T-cell (primary cell): ENCODE measurements at regions of chr12 and their contacts with region 1.

Region 1: DNA sequence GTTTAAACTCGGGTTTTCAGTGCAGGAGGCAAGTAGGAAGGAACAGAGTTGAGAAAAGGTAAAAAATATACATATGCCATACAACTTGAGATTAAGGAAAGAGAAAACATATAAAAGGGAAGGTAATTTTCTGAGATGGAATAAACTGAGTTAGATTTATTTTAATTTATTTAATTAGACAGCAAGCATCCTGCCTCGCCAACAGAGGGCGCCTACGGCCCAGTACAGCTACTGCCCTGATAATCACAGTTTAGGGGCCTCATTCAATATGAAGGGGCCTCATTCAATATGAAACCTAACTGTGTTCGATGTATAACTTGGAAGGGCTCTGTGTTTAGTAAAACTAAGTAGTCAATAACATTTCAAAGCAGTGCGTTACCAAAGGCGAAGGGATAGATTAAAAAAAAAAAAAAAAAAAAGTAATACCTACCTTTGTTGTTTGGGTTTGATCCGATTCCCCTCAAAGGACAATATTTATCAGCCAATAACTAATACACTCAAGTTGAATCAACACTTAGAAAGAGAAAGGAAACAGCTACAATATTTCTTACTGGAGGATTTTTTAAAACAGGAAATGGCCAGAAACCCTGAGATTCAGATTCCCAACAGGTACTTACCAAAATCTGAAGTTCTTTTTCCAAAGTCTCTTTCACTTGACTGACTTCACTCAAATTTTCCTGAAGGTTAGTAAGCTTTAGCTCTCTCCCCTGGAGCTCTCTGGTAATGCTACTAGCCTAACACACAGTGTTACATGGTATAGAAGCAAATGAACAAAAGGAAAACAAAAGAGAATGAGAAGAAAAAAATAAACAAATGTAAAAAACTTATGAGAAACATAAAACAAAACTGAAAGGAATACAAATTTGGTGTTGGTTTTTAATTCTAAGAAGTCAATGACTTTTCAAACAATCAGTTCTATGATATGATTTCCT is 70.0 kb upstream of the VPS33A start:
- DNase-seq: peak in 29 of 35 experiments; percentile 9 to 61 (median 33)
- ATAC-seq: peak in 1 of 4 experiments; percentile 48
- H3K4me3 ChIP-seq: no peak overlapping the region
- H3K4me3 Mint-ChIP-seq: no peak overlapping the region
- H3K27ac ChIP-seq: no peak overlapping the region
- H3K27ac Mint-ChIP-seq: peak overlapping the region; percentile 66
- H3K4me1 ChIP-seq: no peaks in the 10 kb centered on the region
- H3K4me1 Mint-ChIP-seq: peaks cover 4 to 7% (median 6%) of the 10 kb centered on the region in 3 donors
- H3K27me3 ChIP-seq: no peaks in the 10 kb centered on the region
- H3K27me3 Mint-ChIP-seq: no peaks in the 10 kb centered on the region

Region 2: DNA sequence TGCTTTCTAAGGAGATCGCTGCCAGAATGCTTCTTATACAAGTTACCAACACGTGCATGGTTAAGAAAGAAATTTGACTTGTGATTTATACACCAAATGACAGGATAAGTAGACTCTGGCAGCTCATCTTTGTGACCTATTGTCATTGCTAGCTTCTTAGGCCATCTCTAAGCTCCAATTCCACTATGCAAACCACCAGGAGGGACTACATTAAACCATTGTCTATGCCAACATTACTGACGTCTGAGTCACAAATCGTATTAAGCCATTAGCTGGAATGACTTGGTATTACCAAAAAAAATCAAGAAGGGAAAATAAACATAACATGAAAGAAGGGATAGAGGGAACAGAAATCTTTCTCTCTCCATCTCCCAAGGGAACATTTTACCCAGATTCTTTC is 54.2 kb before region 1 on chr12:
- CTCF ChIA-PET with region 1: interaction called in 1 of 2 experiments, 13 read pairs
- POLR2A ChIA-PET with region 1: no interaction called
- DNase-seq: no peak
- ATAC-seq: no peak
- H3K4me3 ChIP-seq: no peak overlapping the region
- H3K4me3 Mint-ChIP-seq: no peak overlapping the region
- H3K27ac ChIP-seq: no peak overlapping the region
- H3K27ac Mint-ChIP-seq: no peak overlapping the region
- H3K4me1 ChIP-seq: no peaks in the 10 kb centered on the region
- H3K4me1 Mint-ChIP-seq: no peaks in the 10 kb centered on the region
- H3K27me3 ChIP-seq: no peaks in the 10 kb centered on the region
- H3K27me3 Mint-ChIP-seq: no peaks in the 10 kb centered on the region

Region 3: DNA sequence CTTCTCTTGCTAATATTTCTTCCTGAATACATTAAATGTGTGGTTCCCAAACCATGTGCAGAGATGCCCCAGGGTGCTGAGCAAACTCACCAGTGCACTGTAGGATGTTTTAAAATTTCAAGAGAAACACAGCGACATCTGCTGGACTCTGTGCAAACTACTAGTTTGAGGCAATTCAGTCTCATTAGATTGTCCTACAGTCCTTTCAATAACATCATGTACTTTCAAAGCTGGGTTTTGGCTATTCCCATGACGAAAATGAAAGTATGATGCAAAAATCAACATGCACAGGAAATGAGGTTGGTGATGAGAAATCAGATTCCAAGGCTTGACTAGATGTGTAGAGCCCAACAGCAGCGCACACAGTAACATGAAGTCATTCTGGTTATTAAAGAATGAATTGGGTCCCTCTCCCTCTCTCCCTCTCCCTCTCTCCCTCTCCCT is 19.9 kb after region 1 on chr12:
- CTCF ChIA-PET with region 1: interaction called, 4 to 13 read pairs
- POLR2A ChIA-PET with region 1: no interaction called
- DNase-seq: peak in 30 of 35 experiments; percentile 4 to 72 (median 30)
- ATAC-seq: peak in 3 of 4 experiments; percentile 63 to 77 (median 67)
- H3K4me3 ChIP-seq: no peak overlapping the region
- H3K4me3 Mint-ChIP-seq: no peak overlapping the region
- H3K27ac ChIP-seq: no peak overlapping the region
- H3K27ac Mint-ChIP-seq: no peak overlapping the region
- H3K4me1 ChIP-seq: peaks cover 0 to 3% of the 10 kb centered on the region in 2 experiments
- H3K4me1 Mint-ChIP-seq: peaks cover 0 to 13% (median 12%) of the 10 kb centered on the region in 3 donors
- H3K27me3 ChIP-seq: no peaks in the 10 kb centered on the region
- H3K27me3 Mint-ChIP-seq: no peaks in the 10 kb centered on the region

Region 4: GRCh38 chr12:122423258-122424083 is 87.2 kb after region 1 on chr12:
- CTCF ChIA-PET with region 1: no interaction called
- POLR2A ChIA-PET with region 1: no interaction called
- DNase-seq: peak in 2 of 35 experiments; percentile 7 to 20
- ATAC-seq: no peak
- H3K4me3 ChIP-seq: peak overlapping the region; percentile 49 to 89
- H3K4me3 Mint-ChIP-seq: peak overlapping the region; percentile 82 to 89 (median 89)
- H3K27ac ChIP-seq: no peak overlapping the region
- H3K27ac Mint-ChIP-seq: peak overlapping the region; percentile 85 to 87
- H3K4me1 ChIP-seq: peaks cover 6 to 27% of the 10 kb centered on the region in 2 experiments
- H3K4me1 Mint-ChIP-seq: peaks cover 26 to 37% (median 31%) of the 10 kb centered on the region in 3 donors
- H3K27me3 ChIP-seq: peaks cover 0 to 5% of the 10 kb centered on the region in 2 experiments
- H3K27me3 Mint-ChIP-seq: no peaks in the 10 kb centered on the region

Region 5: GRCh38 chr12:122743895-122744525 is 407.7 kb after region 1 on chr12:
- CTCF ChIA-PET with region 1: no interaction called
- POLR2A ChIA-PET with region 1: no interaction called
- DNase-seq: peak in 1 of 35 experiments; percentile 7
- ATAC-seq: no peak
- H3K4me3 ChIP-seq: no peak overlapping the region
- H3K4me3 Mint-ChIP-seq: no peak overlapping the region
- H3K27ac ChIP-seq: no peak overlapping the region
- H3K27ac Mint-ChIP-seq: no peak overlapping the region
- H3K4me1 ChIP-seq: no peaks in the 10 kb centered on the region
- H3K4me1 Mint-ChIP-seq: no peaks in the 10 kb centered on the region
- H3K27me3 ChIP-seq: peaks cover 0 to 3% of the 10 kb centered on the region in 2 experiments
- H3K27me3 Mint-ChIP-seq: no peaks in the 10 kb centered on the region